ENCODE measurements at regions of chr9 and their contacts with region 1.

Region 1: GRCh38 chr9:121213136-121213806 is 11.6 kb upstream of the RAB14 start:
- DNase-seq: peak; percentile 65 to 94 (median 86)
- ATAC-seq: peak; percentile 100
- H3K4me3 ChIP-seq: no peak overlapping the region
- H3K27ac ChIP-seq: peak overlapping the region in 1 of 2 donors; percentile 47
- H3K4me1 ChIP-seq: peaks cover 2 to 28% of the 10 kb centered on the region in 2 donors
- H3K27me3 ChIP-seq: no peaks in the 10 kb centered on the region
- CTCF ChIP-seq: peak; percentile 87 to 88

Region 2: DNA sequence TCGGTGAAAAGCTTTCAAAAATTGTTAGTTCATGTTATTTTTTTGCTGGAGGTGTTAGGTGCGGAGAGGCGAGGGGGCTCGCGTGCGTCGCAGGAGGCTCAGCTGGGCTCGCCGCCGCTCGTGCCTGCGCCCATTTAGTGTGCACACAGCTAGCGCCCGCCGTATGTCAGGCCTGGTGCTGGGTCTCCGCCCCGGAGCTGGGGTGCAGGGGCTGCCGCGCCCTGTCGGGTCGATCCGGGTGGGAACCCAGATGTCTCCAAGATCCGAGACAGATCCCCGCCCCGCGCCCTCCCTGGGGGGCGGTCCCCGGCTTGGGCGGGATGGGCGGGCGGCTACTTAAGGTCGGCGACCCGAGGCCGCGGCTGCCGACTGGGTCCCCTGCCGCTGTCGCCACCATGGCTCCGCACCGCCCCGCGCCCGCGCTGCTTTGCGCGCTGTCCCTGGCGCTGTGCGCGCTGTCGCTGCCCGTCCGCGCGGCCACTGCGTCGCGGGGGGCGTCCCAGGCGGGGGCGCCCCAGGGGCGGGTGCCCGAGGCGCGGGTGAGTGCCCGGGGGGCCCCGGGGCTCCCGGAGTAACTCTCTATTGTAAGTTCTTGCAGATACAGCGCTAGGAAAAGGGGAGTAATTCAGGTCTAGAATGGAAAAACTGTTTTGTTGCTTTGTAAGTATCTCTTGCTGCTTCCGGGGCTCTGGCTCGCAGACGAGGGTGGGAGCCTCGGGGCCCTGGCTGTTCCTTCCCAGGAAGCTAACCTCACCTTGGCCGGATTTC is 86.4 kb after region 1 on chr9:
- intact Hi-C with region 1: loop called in 1 of 2 experiments (anchors 10 kb)
- DNase-seq: peak in 2 of 4 donors; percentile 57 to 90
- ATAC-seq: peak; percentile 57
- H3K4me3 ChIP-seq: peak overlapping the region; percentile 41 to 54
- H3K27ac ChIP-seq: peak overlapping the region; percentile 75 to 79
- H3K4me1 ChIP-seq: peaks cover 26 to 81% of the 10 kb centered on the region in 2 donors
- H3K27me3 ChIP-seq: no peaks in the 10 kb centered on the region
- CTCF ChIP-seq: no peak

Region 3: GRCh38 chr9:121399883-121400607 is 186.8 kb after region 1 on chr9:
- intact Hi-C with region 1: loop called in 1 of 2 experiments (anchors 5 kb)
- DNase-seq: peak in 2 of 4 donors; percentile 63 to 76
- ATAC-seq: peak; percentile 88
- H3K4me3 ChIP-seq: no peak overlapping the region
- H3K27ac ChIP-seq: no peak overlapping the region
- H3K4me1 ChIP-seq: peaks cover 0 to 13% of the 10 kb centered on the region in 2 donors
- H3K27me3 ChIP-seq: no peaks in the 10 kb centered on the region
- CTCF ChIP-seq: peak; percentile 62 to 63

Measured in left lung (tissue), 14 donors.